Activated T-helper 2 cell treated with anti-CD3 and anti-CD28 coated beads, Interferon-gamma antibody, Interleukin-2, Interleukin-4, amounts not matched to agents 10 μg/mL and 5 μg/mL and 100 μg/mL, durations not matched to agents 14 hours and 24 hours and 36 hours (primary cell): ENCODE measurements at regions of chr2 and their contacts with region 1.

Region 1: DNA sequence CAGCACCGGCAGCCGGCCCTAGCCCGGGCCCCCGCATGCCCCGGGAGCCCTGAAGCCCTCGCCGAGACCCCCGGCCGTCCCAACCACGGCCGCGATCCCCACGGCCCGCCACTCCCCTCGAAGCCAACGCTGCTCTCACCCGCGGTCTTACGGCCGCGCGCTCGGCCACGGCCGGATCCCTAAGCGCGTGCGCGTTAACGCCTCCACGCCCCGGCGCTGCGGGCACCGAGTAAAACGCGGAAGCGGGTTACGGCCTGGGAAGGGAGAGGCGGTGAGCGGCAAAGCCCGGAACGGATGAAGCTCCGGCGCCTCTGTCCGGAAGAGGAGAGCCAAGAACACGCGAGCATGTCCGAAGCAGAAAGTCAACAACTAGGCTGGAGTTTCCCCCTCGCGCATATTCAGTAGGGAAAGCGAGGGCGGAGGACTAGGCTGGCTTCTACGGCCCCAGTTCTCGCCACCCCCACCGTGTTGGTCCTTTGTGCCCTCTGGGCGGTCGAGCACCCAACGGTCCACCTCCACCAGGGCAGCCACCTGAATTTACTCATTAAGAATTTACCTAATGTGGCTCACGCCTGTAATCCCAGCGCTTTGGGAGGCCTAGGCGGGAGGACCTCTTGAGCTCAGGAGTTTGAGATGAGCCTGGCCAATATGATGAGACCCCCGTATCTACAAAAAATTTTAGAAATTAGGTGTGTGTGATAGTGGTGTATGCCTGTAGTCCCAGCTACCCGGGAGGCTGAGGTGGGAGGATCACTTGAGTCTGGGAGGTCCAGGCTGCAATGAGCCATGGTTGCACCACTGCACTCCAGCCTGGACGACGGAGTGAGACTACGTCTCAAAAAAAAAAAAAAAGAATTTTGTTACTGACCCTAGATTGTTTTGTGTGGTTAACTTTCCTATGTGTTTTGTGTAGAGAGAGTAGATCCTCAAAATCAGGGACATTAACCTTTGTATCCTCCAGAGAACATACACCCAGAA is at the start of gene KANSL3:
- DNase-seq: peak; percentile 90
- H3K4me3 Mint-ChIP-seq: peak within 1 kb of the TSS; percentile 94
- H3K27ac Mint-ChIP-seq: peak within 1 kb of the TSS; percentile 97
- H3K4me1 Mint-ChIP-seq: peaks cover 28% of the 10 kb centered on the region
- H3K27me3 Mint-ChIP-seq: peaks cover 3% of the 10 kb centered on the region
- total RNA-seq, gene KANSL3: 45.8 and 48.3 TPM in 2 replicates

Region 2: GRCh38 chr2:96164459-96165184 is 473.8 kb before region 1 on chr2:
- intact Hi-C with region 1: no loop called
- DNase-seq: peak; percentile 66
- H3K4me3 Mint-ChIP-seq: peak overlapping the region; percentile 83
- H3K27ac Mint-ChIP-seq: peak overlapping the region; percentile 99
- H3K4me1 Mint-ChIP-seq: peaks cover 60% of the 10 kb centered on the region
- H3K27me3 Mint-ChIP-seq: no peaks in the 10 kb centered on the region

Region 3: GRCh38 chr2:96485751-96486651 is 152.4 kb before region 1 on chr2:
- intact Hi-C with region 1: loop called (anchors 5 kb)
- DNase-seq: peak; percentile 87
- H3K4me3 Mint-ChIP-seq: peak overlapping the region; percentile 90
- H3K27ac Mint-ChIP-seq: peak overlapping the region; percentile 98
- H3K4me1 Mint-ChIP-seq: peaks cover 47% of the 10 kb centered on the region
- H3K27me3 Mint-ChIP-seq: no peaks in the 10 kb centered on the region

Region 4: GRCh38 chr2:96594691-96595152 is 43.7 kb before region 1 on chr2:
- intact Hi-C with region 1: loop called (anchors 2 kb)
- DNase-seq: peak; percentile 35
- H3K4me3 Mint-ChIP-seq: peak overlapping the region; percentile 15
- H3K27ac Mint-ChIP-seq: peak overlapping the region; percentile 94
- H3K4me1 Mint-ChIP-seq: peaks cover 46% of the 10 kb centered on the region
- H3K27me3 Mint-ChIP-seq: no peaks in the 10 kb centered on the region

Region 5: GRCh38 chr2:96617012-96617411 is 21.4 kb before region 1 on chr2:
- intact Hi-C with region 1: loop called (anchors 2 kb)
- DNase-seq: no peak
- H3K4me3 Mint-ChIP-seq: peak overlapping the region; percentile 33
- H3K27ac Mint-ChIP-seq: peak overlapping the region; percentile 85
- H3K4me1 Mint-ChIP-seq: peaks cover 30% of the 10 kb centered on the region
- H3K27me3 Mint-ChIP-seq: no peaks in the 10 kb centered on the region

Region 6: DNA sequence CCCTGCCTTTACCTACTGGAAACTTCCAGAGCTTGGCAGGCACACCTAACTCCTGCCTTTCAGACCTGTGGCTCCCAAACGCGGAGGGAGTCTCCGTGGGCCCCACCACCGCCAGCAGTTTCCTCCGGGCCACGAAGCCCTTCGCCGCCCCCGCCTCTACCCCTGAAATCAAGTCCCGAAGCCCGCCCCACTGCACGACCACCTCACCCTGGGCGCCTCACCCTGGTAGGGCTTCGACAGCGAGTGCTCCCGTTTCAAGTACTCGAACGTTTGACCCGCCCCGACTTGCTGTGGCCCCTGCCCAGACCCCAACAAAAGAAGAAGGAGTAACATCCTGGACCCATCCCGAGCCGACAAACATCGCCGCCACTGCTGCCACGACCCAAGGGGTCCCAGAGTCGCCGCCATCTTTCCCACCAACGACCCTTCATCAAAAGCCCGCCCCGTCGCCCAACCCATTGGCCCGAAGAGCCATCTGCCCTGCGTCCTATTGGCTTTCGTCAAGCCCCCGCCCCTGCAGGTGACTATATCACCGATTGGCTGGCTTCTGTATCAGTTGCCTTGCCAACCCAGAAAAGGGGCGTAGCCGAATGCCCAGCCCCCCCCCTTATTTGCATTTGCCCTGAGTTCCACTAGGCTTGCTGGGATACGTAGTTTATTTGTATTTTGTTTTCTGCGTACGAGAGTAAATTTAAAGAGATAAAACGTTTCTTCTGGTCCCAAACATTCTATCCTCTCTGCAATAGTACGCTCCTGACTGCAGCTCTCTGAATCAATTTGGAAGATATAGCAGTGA is 101.4 kb after region 1 on chr2 and contains the start of gene LMAN2L:
- intact Hi-C with region 1: loop called (anchors 5 kb)
- DNase-seq: peak; percentile 95
- H3K4me3 Mint-ChIP-seq: peak within 1 kb of the TSS; percentile 92
- H3K27ac Mint-ChIP-seq: peak within 1 kb of the TSS; percentile 71
- H3K4me1 Mint-ChIP-seq: peaks cover 20% of the 10 kb centered on the region
- H3K27me3 Mint-ChIP-seq: peaks cover 2% of the 10 kb centered on the region
- total RNA-seq, gene LMAN2L: 6.0 and 7.0 TPM in 2 replicates

Region 7: GRCh38 chr2:96760036-96760985 is 121.9 kb after region 1 on chr2 and contains the start of gene CNNM4:
- intact Hi-C with region 1: loop called (anchors 5 kb)
- DNase-seq: peak; percentile 88
- H3K4me3 Mint-ChIP-seq: peak within 1 kb of the TSS; percentile 80
- H3K27ac Mint-ChIP-seq: peak within 1 kb of the TSS; percentile 79
- H3K4me1 Mint-ChIP-seq: peaks cover 44% of the 10 kb centered on the region
- H3K27me3 Mint-ChIP-seq: no peaks in the 10 kb centered on the region
- total RNA-seq, gene CNNM4: 10.1 and 11.3 TPM in 2 replicates

Region 8: DNA sequence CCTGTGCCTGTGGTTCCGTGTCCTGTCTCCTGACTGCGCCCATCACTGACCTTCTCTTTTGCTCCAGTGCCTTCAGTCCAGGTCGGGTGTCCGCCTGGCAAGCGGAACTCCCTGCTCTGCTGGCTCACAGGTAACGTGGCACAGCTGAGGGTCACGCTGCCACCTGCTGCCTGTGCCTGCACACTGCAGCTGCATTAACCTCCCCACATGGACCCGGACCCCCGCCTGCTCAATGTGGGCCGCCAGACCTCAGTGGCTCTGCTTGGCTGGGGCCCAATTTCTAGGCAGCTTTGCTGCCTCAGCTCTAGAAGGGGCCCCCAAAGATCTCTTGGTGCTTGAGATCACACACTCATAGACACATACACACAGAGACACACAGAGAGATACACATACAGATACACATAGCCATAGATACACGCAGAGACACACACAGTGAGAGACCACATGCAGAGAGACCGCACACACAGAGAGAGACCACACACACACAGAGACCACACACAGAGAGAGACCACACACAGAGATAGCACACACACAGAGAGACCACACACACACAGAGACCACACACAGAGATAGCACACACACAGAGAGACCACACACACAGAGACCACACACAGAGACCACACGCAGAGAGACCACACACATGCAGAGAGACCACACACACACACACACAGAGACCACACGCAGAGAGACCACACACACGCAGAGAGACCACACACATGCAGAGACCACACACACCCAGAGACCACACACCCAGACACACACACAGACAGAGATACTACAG is 162.8 kb after region 1 on chr2:
- intact Hi-C with region 1: loop called (anchors 5 kb)
- DNase-seq: peak; percentile 53
- H3K4me3 Mint-ChIP-seq: no peak overlapping the region
- H3K27ac Mint-ChIP-seq: no peak overlapping the region
- H3K4me1 Mint-ChIP-seq: peaks cover under 1% of the 10 kb centered on the region
- H3K27me3 Mint-ChIP-seq: no peaks in the 10 kb centered on the region